Stomach (tissue), 19 donors: ENCODE measurements at regions of chr9 and their contacts with region 1.

Region 1: GRCh38 chr9:28747351-28747985 is 1174.2 kb upstream of the C9orf72 start:
- DNase-seq: no peak
- H3K4me3 ChIP-seq: no peak overlapping the region
- H3K27ac ChIP-seq: no peak overlapping the region
- H3K4me1 ChIP-seq: no peaks in the 10 kb centered on the region
- H3K27me3 ChIP-seq: no peaks in the 10 kb centered on the region
- CTCF ChIP-seq: no peak
- EP300 ChIP-seq: no peak
- POLR2A ChIP-seq: no peak

Region 2: DNA sequence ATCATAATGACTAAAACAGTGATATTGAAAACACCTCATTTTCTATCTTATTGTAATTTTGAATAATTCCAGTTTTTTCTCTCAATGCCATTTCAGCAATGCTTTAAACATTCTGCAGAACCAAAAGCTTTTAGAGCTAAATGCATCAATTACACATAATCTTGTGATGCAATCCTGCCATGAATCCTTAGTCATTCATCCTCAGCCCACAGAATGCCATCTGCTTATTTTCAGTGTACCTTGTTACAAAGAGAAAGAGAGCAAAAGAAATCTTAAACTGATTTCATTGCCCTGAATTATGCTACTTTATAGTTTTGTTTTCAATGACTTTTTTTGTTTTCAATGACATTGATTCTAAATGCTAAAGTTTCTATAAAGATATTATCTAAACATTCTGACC is 60.6 kb after region 1 on chr9:
- intact Hi-C with region 1: loop called (anchors 10 kb)
- DNase-seq: peak in 1 of 2 donors; percentile 18
- H3K4me3 ChIP-seq: no peak overlapping the region
- H3K27ac ChIP-seq: no peak overlapping the region
- H3K4me1 ChIP-seq: peaks cover 0 to 5% (median 0%) of the 10 kb centered on the region in 4 donors
- H3K27me3 ChIP-seq: no peaks in the 10 kb centered on the region
- CTCF ChIP-seq: no peak
- EP300 ChIP-seq: no peak
- POLR2A ChIP-seq: no peak